Left colon (tissue), 2 donors: ENCODE measurements at regions of chr12 and their contacts with region 1.

Region 1: GRCh38 chr12:21697904-21698630 is 40.4 kb upstream of the LDHB start:
- DNase-seq: no peak
- ATAC-seq: peak; percentile 25

Region 2: DNA sequence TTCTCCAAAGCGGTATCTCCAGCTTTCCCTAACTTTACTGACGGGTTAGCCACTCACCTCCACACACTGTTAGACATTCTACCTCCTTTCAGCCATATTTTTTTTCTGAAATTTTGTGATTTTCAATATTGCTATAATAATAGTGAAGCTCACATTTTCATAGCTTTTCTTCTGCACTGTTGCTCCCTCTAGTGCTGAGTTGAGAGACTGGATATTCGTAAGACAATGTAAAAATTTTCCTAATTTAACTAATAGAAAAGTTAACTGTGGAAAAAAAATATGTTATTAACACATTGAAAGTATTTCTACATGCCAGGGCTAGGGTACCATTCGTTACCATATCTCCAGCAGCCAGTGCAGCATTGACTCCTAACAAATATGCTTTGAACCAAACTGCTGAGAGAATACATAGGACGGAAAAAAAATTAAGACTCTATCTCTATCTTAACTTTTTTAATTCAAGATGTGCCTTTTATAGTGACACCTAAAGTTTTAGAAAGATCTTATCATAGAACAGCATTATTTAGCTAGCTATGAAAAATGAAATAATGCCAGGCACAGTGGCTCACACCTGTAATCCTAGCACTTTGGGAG is 291.8 kb after region 1 on chr12:
- intact Hi-C with region 1: loop called in 1 of 2 experiments (anchors 5 kb)
- DNase-seq: no peak
- ATAC-seq: no peak

Region 3: GRCh38 chr12:22029991-22030390 is 331.9 kb after region 1 on chr12:
- intact Hi-C with region 1: loop called in 1 of 2 experiments (anchors 10 kb)
- DNase-seq: no peak
- ATAC-seq: no peak

Region 4: GRCh38 chr12:22275846-22276245 is 577.8 kb after region 1 on chr12:
- intact Hi-C with region 1: no loop called
- DNase-seq: peak; percentile 47 to 81
- ATAC-seq: peak; percentile 50